ENCODE measurements at regions of chr16 and their contacts with region 1.

Region 1: GRCh38 chr16:29862884-29863668 is at the start of gene CDIPT:
- DNase-seq: peak; percentile 98
- ATAC-seq: peak; percentile 97
- H3K4me3 ChIP-seq: peak within 1 kb of the TSS; percentile 67 to 92 (median 81)
- H3K4me3 Mint-ChIP-seq: peak within 1 kb of the TSS; percentile 96
- H3K27ac ChIP-seq: peak within 1 kb of the TSS; percentile 96 to 97
- H3K27ac Mint-ChIP-seq: peak within 1 kb of the TSS; percentile 99
- H3K4me1 ChIP-seq: peaks cover 14 to 19% of the 10 kb centered on the region in 2 donors
- H3K4me1 Mint-ChIP-seq: peaks cover 21% of the 10 kb centered on the region
- H3K27me3 ChIP-seq: no peaks in the 10 kb centered on the region
- H3K27me3 Mint-ChIP-seq: no peaks in the 10 kb centered on the region
- CTCF ChIP-seq: peak; percentile 55
- total RNA-seq, gene CDIPT: 49.2 and 51.2 TPM in 2 replicates

Region 2: DNA sequence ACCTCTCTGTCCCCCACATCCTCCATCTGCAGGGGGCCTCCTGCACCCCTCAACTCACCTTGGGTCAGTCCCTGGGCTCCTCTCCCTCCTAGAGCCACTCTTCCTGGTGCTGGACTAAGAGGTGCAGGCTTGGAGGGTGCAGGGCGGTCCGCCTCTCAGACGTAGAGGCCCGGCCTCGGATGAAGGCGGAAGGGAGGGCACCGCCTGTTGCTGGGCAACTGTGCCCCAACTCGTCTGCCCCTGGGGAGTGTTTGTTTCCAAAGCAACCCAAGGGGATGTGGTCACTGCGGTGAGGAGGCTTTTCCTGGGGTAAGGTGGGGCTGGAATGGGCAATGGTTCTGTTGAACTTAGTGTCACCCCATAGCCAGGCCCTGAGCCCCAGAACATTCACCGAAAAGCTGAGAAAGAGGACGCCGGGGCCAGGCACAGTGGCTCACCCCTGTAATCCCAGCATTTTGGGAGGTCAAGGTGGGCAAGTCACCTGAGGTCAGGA is 117.2 kb before region 1 on chr16 and contains the start of gene C16orf54:
- CTCF ChIA-PET with region 1: no interaction called
- POLR2A ChIA-PET with region 1: no interaction called
- intact Hi-C with region 1: loop called (anchors 5 kb)
- DNase-seq: peak; percentile 93
- ATAC-seq: peak; percentile 90
- H3K4me3 ChIP-seq: peak within 1 kb of the TSS; percentile 91 to 100 (median 97)
- H3K4me3 Mint-ChIP-seq: peak within 1 kb of the TSS; percentile 99
- H3K27ac ChIP-seq: peak within 1 kb of the TSS; percentile 95
- H3K27ac Mint-ChIP-seq: peak within 1 kb of the TSS; percentile 99
- H3K4me1 ChIP-seq: peaks cover 44 to 59% of the 10 kb centered on the region in 2 donors
- H3K4me1 Mint-ChIP-seq: peaks cover 64% of the 10 kb centered on the region
- H3K27me3 ChIP-seq: no peaks in the 10 kb centered on the region
- H3K27me3 Mint-ChIP-seq: no peaks in the 10 kb centered on the region
- CTCF ChIP-seq: no peak
- total RNA-seq, gene C16orf54: 64.4 and 68.3 TPM in 2 replicates

Region 3: DNA sequence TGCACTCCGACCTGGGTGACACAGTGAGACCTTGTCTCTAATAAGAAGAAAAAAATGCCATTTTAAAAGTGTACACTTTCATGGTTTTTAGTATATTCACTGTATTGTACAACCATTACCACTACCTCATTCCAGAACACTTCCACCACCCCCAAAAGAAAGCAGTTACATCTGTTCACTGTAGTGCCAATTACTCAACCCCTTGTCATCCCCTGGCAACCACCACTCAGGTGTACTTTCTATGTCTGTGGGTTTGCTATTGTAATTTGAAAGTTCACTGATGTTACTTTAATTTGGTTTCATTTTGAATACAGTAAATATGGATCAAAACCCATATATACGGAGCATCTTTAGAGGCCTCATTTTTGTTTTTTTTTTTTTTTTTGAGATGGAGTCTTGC is 78.9 kb before region 1 on chr16:
- CTCF ChIA-PET with region 1: no interaction called
- POLR2A ChIA-PET with region 1: no interaction called
- intact Hi-C with region 1: no loop called
- DNase-seq: no peak
- ATAC-seq: no peak
- H3K4me3 ChIP-seq: no peak overlapping the region
- H3K4me3 Mint-ChIP-seq: no peak overlapping the region
- H3K27ac ChIP-seq: no peak overlapping the region
- H3K27ac Mint-ChIP-seq: no peak overlapping the region
- H3K4me1 ChIP-seq: peaks cover 8 to 15% of the 10 kb centered on the region in 2 donors
- H3K4me1 Mint-ChIP-seq: peaks cover 11% of the 10 kb centered on the region
- H3K27me3 ChIP-seq: no peaks in the 10 kb centered on the region
- H3K27me3 Mint-ChIP-seq: no peaks in the 10 kb centered on the region
- CTCF ChIP-seq: no peak

Region 4: GRCh38 chr16:29815793-29816693 is 47.0 kb before region 1 on chr16 and contains the start of gene PAGR1:
- CTCF ChIA-PET with region 1: interaction called, 4 read pairs
- POLR2A ChIA-PET with region 1: interaction called, 3 read pairs
- intact Hi-C with region 1: loop called (anchors 1 kb)
- DNase-seq: peak; percentile 100
- ATAC-seq: peak; percentile 76
- H3K4me3 ChIP-seq: peak within 1 kb of the TSS; percentile 73 to 93 (median 84)
- H3K4me3 Mint-ChIP-seq: peak within 1 kb of the TSS; percentile 97
- H3K27ac ChIP-seq: peak within 1 kb of the TSS; percentile 88
- H3K27ac Mint-ChIP-seq: peak within 1 kb of the TSS; percentile 98
- H3K4me1 ChIP-seq: peaks cover 40 to 60% of the 10 kb centered on the region in 2 donors
- H3K4me1 Mint-ChIP-seq: peaks cover 65% of the 10 kb centered on the region
- H3K27me3 ChIP-seq: peaks cover 0 to 13% (median 5%) of the 10 kb centered on the region in 4 experiments
- H3K27me3 Mint-ChIP-seq: no peaks in the 10 kb centered on the region
- CTCF ChIP-seq: peak; percentile 97
- total RNA-seq, gene PAGR1: 26.7 and 28.4 TPM in 2 replicates

Region 5: DNA sequence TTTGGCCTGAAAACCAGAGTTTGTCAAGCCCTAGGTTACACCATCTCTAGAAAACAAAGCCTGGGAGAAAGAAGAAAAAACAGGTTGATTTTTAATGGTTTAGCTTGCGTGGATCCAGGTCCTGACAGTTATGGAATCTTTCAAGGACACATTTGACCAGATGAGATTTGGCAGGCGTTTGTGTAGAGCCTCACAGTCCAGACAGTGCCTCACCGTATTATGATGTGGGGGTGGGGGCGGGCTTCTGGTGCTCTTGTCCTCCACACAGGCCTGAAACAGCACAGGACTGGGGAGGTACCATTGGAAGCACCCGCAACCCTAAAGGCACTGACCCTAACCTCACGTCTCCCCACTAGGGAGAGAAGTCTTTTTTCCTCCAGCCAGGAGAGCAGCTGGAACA is 23.3 kb before region 1 on chr16:
- CTCF ChIA-PET with region 1: no interaction called
- POLR2A ChIA-PET with region 1: no interaction called
- intact Hi-C with region 1: no loop called
- DNase-seq: no peak
- ATAC-seq: no peak
- H3K4me3 ChIP-seq: no peak overlapping the region
- H3K4me3 Mint-ChIP-seq: no peak overlapping the region
- H3K27ac ChIP-seq: no peak overlapping the region
- H3K27ac Mint-ChIP-seq: no peak overlapping the region
- H3K4me1 ChIP-seq: no peaks in the 10 kb centered on the region
- H3K4me1 Mint-ChIP-seq: no peaks in the 10 kb centered on the region
- H3K27me3 ChIP-seq: no peaks in the 10 kb centered on the region
- H3K27me3 Mint-ChIP-seq: no peaks in the 10 kb centered on the region
- CTCF ChIP-seq: no peak

Region 6: GRCh38 chr16:29900102-29900887 is 37.2 kb after region 1 on chr16 and contains the start of gene ASPHD1:
- CTCF ChIA-PET with region 1: no interaction called
- POLR2A ChIA-PET with region 1: no interaction called
- intact Hi-C with region 1: loop called (anchors 1 kb)
- DNase-seq: peak; percentile 83
- ATAC-seq: peak; percentile 83
- H3K4me3 ChIP-seq: peak within 1 kb of the TSS in 4 of 5 experiments; percentile 29 to 62 (median 50)
- H3K4me3 Mint-ChIP-seq: peak within 1 kb of the TSS; percentile 62
- H3K27ac ChIP-seq: no peak within 1 kb of the TSS
- H3K27ac Mint-ChIP-seq: no peak within 1 kb of the TSS
- H3K4me1 ChIP-seq: peaks cover 15 to 22% of the 10 kb centered on the region in 2 donors
- H3K4me1 Mint-ChIP-seq: peaks cover 3% of the 10 kb centered on the region
- H3K27me3 ChIP-seq: peaks cover 0 to 48% (median 25%) of the 10 kb centered on the region in 4 experiments
- H3K27me3 Mint-ChIP-seq: peaks cover 32% of the 10 kb centered on the region
- CTCF ChIP-seq: no peak
- total RNA-seq, gene ASPHD1: not detected in 2 replicates

Region 7: DNA sequence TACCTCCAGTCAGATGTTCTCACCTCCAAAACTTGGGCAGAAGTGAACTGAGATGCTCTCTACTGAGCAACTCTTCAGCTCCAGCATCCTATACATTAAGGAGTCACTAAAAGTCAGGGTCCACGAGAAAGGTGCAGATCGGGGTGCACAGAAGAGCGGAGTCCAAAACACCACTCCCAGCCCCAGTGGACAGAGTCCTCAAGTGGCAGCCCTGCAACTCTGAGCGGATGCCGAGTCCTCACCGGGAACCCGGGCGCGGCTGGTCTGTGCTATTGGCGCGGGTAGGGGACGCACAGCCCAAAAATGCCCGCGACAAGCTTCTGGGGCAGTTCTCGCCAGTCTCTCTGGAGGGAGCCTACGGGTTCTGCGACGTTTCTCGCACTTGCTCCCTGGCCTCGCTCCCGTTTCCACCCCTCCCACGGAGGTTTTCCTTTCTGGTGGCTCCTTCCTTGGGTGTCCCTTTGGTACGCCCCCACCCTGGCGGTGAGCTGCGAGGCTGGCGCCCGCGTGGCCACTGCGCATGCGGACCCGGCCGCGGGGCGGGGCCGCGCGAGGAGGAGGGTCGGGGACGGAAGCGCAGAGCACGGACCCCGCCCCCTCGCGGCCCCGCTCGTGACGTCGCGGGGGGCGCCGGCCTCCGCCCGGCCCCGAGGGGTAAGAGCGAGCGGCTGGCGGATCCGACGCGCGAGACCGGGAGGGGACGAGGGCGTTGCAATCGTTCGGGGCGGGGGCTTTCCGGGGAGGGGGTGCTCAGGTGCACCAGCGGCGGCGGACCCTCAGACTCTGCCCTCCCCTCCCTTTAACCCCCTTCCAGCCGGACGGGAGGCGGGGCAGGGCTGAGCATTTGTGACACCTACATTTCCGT is 98.6 kb after region 1 on chr16 and contains the start of gene TMEM219:
- CTCF ChIA-PET with region 1: no interaction called
- POLR2A ChIA-PET with region 1: interaction called, 3 read pairs
- intact Hi-C with region 1: loop called (anchors 1 kb)
- DNase-seq: peak; percentile 97
- ATAC-seq: peak; percentile 92
- H3K4me3 ChIP-seq: peak within 1 kb of the TSS; percentile 76 to 86 (median 84)
- H3K4me3 Mint-ChIP-seq: peak within 1 kb of the TSS; percentile 90
- H3K27ac ChIP-seq: peak within 1 kb of the TSS; percentile 79 to 88
- H3K27ac Mint-ChIP-seq: peak within 1 kb of the TSS; percentile 91
- H3K4me1 ChIP-seq: peaks cover 13 to 19% of the 10 kb centered on the region in 2 donors
- H3K4me1 Mint-ChIP-seq: peaks cover 20% of the 10 kb centered on the region
- H3K27me3 ChIP-seq: no peaks in the 10 kb centered on the region
- H3K27me3 Mint-ChIP-seq: no peaks in the 10 kb centered on the region
- CTCF ChIP-seq: peak; percentile 65
- total RNA-seq, gene TMEM219: 56.3 and 66.6 TPM in 2 replicates

Region 8: GRCh38 chr16:29995911-29996772 is 133.1 kb after region 1 on chr16 and contains the start of gene INO80E:
- CTCF ChIA-PET with region 1: no interaction called
- POLR2A ChIA-PET with region 1: no interaction called
- intact Hi-C with region 1: loop called (anchors 1 kb)
- DNase-seq: peak; percentile 97
- ATAC-seq: peak; percentile 96
- H3K4me3 ChIP-seq: peak within 1 kb of the TSS; percentile 89 to 100 (median 98)
- H3K4me3 Mint-ChIP-seq: peak within 1 kb of the TSS; percentile 98
- H3K27ac ChIP-seq: peak within 1 kb of the TSS; percentile 94 to 97
- H3K27ac Mint-ChIP-seq: peak within 1 kb of the TSS; percentile 94
- H3K4me1 ChIP-seq: peaks cover 15 to 22% of the 10 kb centered on the region in 2 donors
- H3K4me1 Mint-ChIP-seq: peaks cover 43% of the 10 kb centered on the region
- H3K27me3 ChIP-seq: no peaks in the 10 kb centered on the region
- H3K27me3 Mint-ChIP-seq: no peaks in the 10 kb centered on the region
- CTCF ChIP-seq: no peak
- total RNA-seq, gene INO80E: 113 and 119 TPM in 2 replicates

Region 9: GRCh38 chr16:30395155-30395991 is 532.3 kb after region 1 on chr16 and contains the start of gene ZNF48:
- CTCF ChIA-PET with region 1: no interaction called
- POLR2A ChIA-PET with region 1: no interaction called
- intact Hi-C with region 1: loop called (anchors 10 kb)
- DNase-seq: peak; percentile 87
- ATAC-seq: peak; percentile 95
- H3K4me3 ChIP-seq: peak within 1 kb of the TSS; percentile 32 to 75 (median 66)
- H3K4me3 Mint-ChIP-seq: peak within 1 kb of the TSS; percentile 92
- H3K27ac ChIP-seq: peak within 1 kb of the TSS in 1 of 2 donors; percentile 64
- H3K27ac Mint-ChIP-seq: peak within 1 kb of the TSS; percentile 91
- H3K4me1 ChIP-seq: peaks cover 13 to 31% of the 10 kb centered on the region in 2 donors
- H3K4me1 Mint-ChIP-seq: peaks cover 23% of the 10 kb centered on the region
- H3K27me3 ChIP-seq: no peaks in the 10 kb centered on the region
- H3K27me3 Mint-ChIP-seq: no peaks in the 10 kb centered on the region
- CTCF ChIP-seq: peak; percentile 26
- total RNA-seq, gene ZNF48: 13.3 and 14.2 TPM in 2 replicates